Mammary epithelial cell (primary cell): ENCODE measurements at regions of chr10 and their contacts with region 1.

Region 1: GRCh38 chr10:69232252-69232651 is 12.1 kb downstream of the HKDC1 start:
- DNase-seq: peak; percentile 76
- H3K4me3 ChIP-seq: no peak overlapping the region
- H3K27ac ChIP-seq: peak overlapping the region; percentile 4
- H3K4me1 ChIP-seq: peaks cover 19% of the 10 kb centered on the region
- H3K27me3 ChIP-seq: no peaks in the 10 kb centered on the region
- CTCF ChIP-seq: no peak

Region 2: GRCh38 chr10:69092959-69093850 is 139.0 kb before region 1 on chr10:
- CTCF ChIA-PET with region 1: no interaction called
- dilution Hi-C with region 1: no loop called
- in situ Hi-C with region 1: no loop called
- intact Hi-C with region 1: no loop called
- DNase-seq: peak; percentile 77
- H3K4me3 ChIP-seq: no peak overlapping the region
- H3K27ac ChIP-seq: no peak overlapping the region
- H3K4me1 ChIP-seq: no peaks in the 10 kb centered on the region
- H3K27me3 ChIP-seq: no peaks in the 10 kb centered on the region
- CTCF ChIP-seq: peak; percentile 57 to 77

Region 3: DNA sequence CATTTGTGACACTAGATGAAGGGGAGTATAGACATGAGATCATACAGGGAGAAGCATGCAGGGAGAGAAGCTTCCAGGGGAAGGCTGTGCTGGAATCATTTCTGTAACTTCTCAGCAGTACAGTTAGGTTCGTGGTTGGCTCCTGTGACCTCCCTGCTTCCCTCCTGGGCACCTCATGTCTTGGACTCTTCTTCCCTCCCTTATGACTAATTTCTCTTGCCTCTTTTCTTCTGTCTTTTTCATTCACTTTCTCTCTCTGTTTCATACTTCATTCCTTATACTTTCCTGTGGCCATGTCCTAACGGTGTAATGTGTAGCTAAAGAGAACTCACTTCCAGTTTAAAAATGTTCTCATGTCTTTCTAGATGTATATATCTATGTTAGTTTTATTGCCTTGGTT is 31.2 kb before region 1 on chr10:
- CTCF ChIA-PET with region 1: no interaction called
- dilution Hi-C with region 1: no loop called
- in situ Hi-C with region 1: no loop called
- intact Hi-C with region 1: loop called (anchors 1 kb)
- DNase-seq: no peak
- H3K4me3 ChIP-seq: no peak overlapping the region
- H3K27ac ChIP-seq: no peak overlapping the region
- H3K4me1 ChIP-seq: no peaks in the 10 kb centered on the region
- H3K27me3 ChIP-seq: no peaks in the 10 kb centered on the region
- CTCF ChIP-seq: no peak

Region 4: GRCh38 chr10:69278446-69278963 is 46.3 kb after region 1 on chr10 and contains the start of gene HK1:
- CTCF ChIA-PET with region 1: no interaction called
- dilution Hi-C with region 1: no loop called
- in situ Hi-C with region 1: no loop called
- intact Hi-C with region 1: no loop called
- DNase-seq: no peak
- H3K4me3 ChIP-seq: no peak within 1 kb of the TSS
- H3K27ac ChIP-seq: no peak within 1 kb of the TSS
- H3K4me1 ChIP-seq: no peaks in the 10 kb centered on the region
- H3K27me3 ChIP-seq: no peaks in the 10 kb centered on the region
- CTCF ChIP-seq: no peak
- total RNA-seq, gene HK1: 115 to 133 TPM

Region 5: GRCh38 chr10:69303632-69304051 is 71.4 kb after region 1 on chr10:
- CTCF ChIA-PET with region 1: no interaction called
- dilution Hi-C with region 1: no loop called
- in situ Hi-C with region 1: no loop called
- intact Hi-C with region 1: no loop called
- DNase-seq: peak; percentile 79
- H3K4me3 ChIP-seq: no peak overlapping the region
- H3K27ac ChIP-seq: no peak overlapping the region
- H3K4me1 ChIP-seq: no peaks in the 10 kb centered on the region
- H3K27me3 ChIP-seq: no peaks in the 10 kb centered on the region
- CTCF ChIP-seq: no peak

Region 6: DNA sequence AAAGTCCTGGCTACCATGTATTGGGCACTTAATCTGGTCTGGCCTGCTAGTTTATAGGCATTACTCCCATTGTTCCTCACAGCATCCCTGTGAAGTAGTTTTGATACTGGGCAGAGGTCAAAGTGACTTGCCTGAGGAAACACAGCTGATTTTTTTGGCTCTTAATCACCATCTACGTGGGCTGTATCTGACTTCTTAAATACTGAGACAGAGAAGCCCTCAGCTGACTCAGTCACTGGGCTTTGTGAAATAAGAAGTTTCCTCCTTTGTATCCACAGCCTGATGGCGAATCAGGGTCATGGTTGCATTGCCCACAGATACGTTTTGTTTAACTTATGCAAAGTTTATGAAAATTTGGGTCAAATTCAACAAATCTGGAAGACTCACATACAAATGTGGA is 171.3 kb after region 1 on chr10:
- CTCF ChIA-PET with region 1: no interaction called
- dilution Hi-C with region 1: loop called (anchors 5 kb)
- in situ Hi-C with region 1: loop called in 1 of 2 experiments (anchors 5 kb)
- intact Hi-C with region 1: loop called (anchors 1 kb)
- DNase-seq: peak; percentile 31
- H3K4me3 ChIP-seq: no peak overlapping the region
- H3K27ac ChIP-seq: no peak overlapping the region
- H3K4me1 ChIP-seq: peaks cover 9% of the 10 kb centered on the region
- H3K27me3 ChIP-seq: no peaks in the 10 kb centered on the region
- CTCF ChIP-seq: no peak